OCI-LY7 (cell line): ENCODE measurements at regions of chr12 and their contacts with region 1.

Region 1: DNA sequence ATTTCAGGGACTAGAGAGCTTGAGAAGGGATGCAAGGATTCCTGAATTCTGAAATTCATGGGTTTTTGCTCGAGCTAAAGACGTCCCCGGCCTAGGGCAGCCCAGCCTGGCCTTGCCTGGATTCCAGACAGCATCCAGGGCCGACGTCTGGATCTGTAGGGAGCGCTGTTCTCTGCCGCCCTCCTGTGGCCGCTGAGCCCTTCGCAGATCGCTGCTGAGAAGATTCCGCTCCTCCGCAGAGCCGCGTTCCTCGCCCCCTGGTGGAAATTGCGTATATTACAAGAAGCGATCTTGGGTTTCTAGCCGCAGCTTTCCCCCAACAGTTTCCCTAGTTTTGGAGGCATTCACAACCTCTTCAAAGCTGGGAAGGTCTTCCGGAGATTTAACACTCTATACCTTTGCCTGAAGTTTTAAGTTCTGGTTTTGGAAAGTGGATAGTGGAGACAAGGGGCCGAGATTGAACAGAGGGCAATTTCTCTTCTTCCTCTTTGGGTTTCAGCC is 5.1 kb downstream of the CISTR start:
- DNase-seq: peak; percentile 89
- H3K4me3 ChIP-seq: no peak overlapping the region
- H3K27ac ChIP-seq: no peak overlapping the region
- H3K4me1 ChIP-seq: peaks cover 45% of the 10 kb centered on the region
- CTCF ChIP-seq: peak; percentile 100

Region 2: DNA sequence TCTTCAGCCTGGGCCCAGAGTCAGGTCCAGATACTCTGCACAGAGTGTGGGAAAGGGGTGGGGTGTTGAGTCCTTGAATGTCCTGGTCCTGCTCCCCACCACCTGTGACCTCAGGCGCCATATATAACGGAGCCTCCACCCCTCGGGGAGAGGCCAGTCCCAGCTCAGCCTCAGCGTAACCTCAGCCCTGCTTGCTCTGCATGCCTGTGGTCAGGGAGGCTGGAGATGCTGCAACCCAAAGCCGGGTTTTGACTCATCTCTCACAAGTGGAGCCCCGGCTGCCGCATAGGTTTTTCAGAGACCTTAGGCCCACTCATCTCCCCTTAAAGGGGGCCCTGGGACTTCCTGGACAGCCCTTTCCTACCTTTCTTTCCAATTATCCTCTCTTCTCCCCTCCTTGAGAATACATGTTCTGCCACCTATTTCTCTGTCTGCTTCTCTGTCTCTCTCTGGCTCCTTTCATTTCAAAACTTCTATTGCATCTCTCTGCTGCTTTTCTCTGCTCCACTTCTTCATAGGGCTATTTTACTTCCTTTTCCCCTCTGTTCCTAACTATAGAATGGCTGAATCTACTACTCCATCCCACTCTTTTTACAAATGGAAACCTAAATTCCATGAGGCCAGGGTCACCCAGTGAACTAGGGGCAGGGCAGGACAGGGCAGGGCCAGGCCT is 540.8 kb before region 1 on chr12:
- CTCF ChIA-PET with region 1: no interaction called
- POLR2A ChIA-PET with region 1: no interaction called
- intact Hi-C with region 1: loop called (anchors 5 kb)
- DNase-seq: peak; percentile 74
- H3K4me3 ChIP-seq: peak overlapping the region; percentile 83
- H3K27ac ChIP-seq: peak overlapping the region; percentile 98
- H3K4me1 ChIP-seq: peaks cover 79% of the 10 kb centered on the region
- CTCF ChIP-seq: no peak

Region 3: DNA sequence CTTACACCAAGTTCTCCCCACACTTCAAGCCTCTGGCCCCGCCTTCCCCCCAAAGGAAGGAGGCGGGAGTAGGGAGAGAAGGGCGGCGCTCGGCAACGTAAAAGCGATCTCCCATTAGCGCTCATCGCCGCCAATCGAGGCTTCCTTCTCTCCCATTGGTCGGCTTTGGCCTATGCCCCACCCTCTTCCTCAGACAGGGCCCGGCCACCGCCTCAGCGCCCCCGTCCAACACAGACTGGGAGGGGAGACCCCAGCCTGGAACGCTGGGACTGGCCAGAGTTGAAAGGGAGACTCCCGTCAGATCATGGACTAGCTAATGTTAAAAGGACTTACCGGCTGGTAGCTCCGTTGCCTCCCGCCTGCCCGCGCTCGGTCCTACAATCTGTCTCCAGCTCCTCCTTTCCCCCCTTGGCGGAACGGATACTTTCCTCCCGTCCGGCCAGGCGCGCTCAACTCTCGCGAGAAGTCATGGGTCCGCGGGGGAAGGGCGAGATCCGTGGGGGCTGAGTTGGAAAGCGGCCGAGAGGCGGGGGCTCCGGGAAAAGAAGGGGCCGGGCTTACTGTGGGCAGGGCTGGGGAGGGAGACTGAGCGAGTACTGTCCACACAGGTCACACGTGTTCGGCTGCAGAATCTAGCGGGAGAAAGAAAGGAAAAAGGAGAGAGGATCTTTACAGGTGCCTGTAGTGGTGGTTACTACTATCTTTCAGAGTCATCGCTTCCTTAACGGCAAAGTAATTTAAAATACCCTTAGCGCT is 120.5 kb before region 1 on chr12 and contains the start of gene ATF7:
- CTCF ChIA-PET with region 1: no interaction called
- POLR2A ChIA-PET with region 1: no interaction called
- intact Hi-C with region 1: loop called (anchors 5 kb)
- DNase-seq: peak; percentile 98
- H3K4me3 ChIP-seq: peak within 1 kb of the TSS; percentile 90
- H3K27ac ChIP-seq: peak within 1 kb of the TSS; percentile 43
- H3K4me1 ChIP-seq: peaks cover 29% of the 10 kb centered on the region
- CTCF ChIP-seq: no peak
- total RNA-seq, gene ATF7: 5.9 and 6.8 TPM in 2 replicates

Region 4: DNA sequence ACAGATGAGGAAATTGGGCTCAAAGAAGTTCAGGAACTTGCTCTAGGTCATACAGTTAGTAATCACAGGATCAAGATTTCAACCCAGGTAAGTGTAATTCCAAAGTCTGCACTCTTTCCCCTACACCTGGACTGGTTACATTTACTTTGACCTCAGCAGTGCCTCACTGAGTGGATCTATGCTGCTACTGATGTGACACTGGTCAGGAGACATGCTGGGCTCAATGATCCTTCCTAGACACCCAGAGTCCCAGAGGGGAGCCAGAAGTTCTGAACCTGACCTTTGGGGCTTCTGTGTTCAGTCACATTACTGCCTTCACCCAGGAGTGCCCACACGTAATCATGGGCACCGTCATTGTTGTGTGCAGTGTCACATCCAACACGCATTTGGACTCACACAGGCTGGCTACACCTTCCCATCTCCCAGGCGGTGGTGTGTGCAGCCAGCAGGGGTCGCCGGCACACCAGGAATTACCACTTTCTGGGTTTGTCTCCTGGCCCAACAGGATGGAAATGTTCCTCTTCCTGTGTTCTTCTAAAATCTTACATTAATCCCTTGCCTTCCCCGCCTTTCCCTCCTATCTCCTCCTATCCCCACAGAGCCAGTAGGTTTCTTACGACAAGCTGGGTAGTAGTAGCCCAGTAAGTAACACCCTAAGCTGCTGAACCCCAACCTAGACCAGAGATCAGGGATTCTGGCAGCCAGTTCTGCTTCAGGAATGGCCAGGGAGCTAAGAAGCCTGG is 45.0 kb before region 1 on chr12:
- CTCF ChIA-PET with region 1: interaction called, 12 read pairs
- POLR2A ChIA-PET with region 1: interaction called, 4 read pairs
- intact Hi-C with region 1: loop called (anchors 1 kb)
- DNase-seq: peak; percentile 71
- H3K4me3 ChIP-seq: no peak overlapping the region
- H3K27ac ChIP-seq: no peak overlapping the region
- H3K4me1 ChIP-seq: no peaks in the 10 kb centered on the region
- CTCF ChIP-seq: peak; percentile 92

Region 5: GRCh38 chr12:54214553-54215406 is 468.1 kb after region 1 on chr12:
- CTCF ChIA-PET with region 1: no interaction called
- POLR2A ChIA-PET with region 1: no interaction called
- intact Hi-C with region 1: loop called (anchors 5 kb)
- DNase-seq: peak; percentile 97
- H3K4me3 ChIP-seq: peak overlapping the region; percentile 55
- H3K27ac ChIP-seq: peak overlapping the region; percentile 89
- H3K4me1 ChIP-seq: peaks cover 63% of the 10 kb centered on the region
- CTCF ChIP-seq: peak; percentile 100